ENCODE measurements at regions of chr15 and their contacts with region 1.

Region 1: DNA sequence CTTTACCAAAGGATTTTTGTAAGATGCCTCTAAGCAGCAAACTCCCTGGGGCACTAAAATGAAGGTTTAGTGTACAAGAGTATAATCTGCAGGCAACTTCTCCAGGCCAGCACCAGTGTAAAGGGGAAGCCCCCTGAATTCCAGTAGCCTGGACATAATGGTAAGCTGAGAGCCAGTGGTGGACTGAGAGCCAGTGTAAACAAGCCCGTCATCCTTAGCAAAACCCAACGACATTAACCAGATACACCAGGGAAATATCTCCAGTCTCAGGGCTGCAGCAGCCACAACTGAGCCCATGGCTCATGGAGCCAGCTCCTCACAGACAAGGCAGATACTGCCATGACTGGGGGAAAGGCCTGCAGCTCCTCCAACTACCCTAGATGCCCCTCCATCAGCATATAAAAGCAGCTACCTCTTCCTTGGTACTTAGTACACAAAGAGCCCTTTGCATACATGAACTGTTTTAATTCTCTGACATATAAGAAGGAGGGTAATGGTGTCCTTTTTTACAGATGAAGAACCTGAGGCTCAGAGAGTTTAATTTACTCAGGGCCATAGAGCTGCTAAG is 21.7 kb downstream of the PARP16 start:
- DNase-seq: peak in 1 of 2 donors; percentile 49
- H3K4me3 ChIP-seq: no peak overlapping the region
- H3K27ac ChIP-seq: peak overlapping the region in 3 of 5 donors; percentile 18 to 46 (median 32)
- H3K4me1 ChIP-seq: peaks cover 3 to 53% (median 11%) of the 10 kb centered on the region in 4 donors
- H3K27me3 ChIP-seq: no peaks in the 10 kb centered on the region
- CTCF ChIP-seq: no peak
- EP300 ChIP-seq: no peak
- POLR2A ChIP-seq: no peak

Region 2: DNA sequence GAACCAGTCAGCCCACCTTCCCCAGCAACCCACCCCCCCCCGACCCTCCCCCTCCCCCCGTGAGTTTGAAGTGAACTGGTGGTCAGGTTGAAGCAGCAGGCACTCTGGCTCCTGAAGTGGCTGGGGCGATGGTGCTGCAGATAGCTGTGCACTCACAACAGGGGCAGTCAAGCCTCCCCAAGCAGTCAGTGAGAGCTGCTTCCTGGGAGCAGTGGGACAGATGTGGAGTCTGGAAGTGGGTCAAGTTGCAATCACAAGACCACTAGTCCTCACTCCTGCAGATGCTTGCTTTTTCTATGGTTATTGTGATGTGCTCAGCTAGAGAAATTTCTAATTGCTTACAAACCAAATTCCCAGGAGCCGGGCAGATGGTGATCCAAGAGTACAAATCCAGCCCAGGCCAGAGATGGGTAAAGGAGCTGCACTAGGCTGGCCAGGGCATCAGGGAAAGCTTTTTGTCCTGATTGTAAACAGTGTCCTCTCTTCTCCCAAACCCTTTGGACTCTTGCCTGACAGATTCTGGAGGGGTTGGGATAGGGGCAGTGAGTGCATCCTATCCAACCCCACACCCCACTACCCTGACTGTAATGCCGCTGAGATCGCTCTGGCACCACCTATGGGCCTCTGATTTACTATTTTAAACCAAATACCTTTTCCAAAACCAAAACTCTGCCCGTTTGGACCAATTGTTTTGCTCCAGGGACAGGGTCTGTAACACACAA is 70.0 kb before region 1 on chr15:
- intact Hi-C with region 1: loop called (anchors 5 kb)
- DNase-seq: peak in 1 of 2 donors; percentile 69
- H3K4me3 ChIP-seq: no peak overlapping the region
- H3K27ac ChIP-seq: peak overlapping the region in 3 of 5 donors; percentile 19 to 64 (median 56)
- H3K4me1 ChIP-seq: peaks cover 0 to 11% (median 0%) of the 10 kb centered on the region in 4 donors
- H3K27me3 ChIP-seq: no peaks in the 10 kb centered on the region
- CTCF ChIP-seq: no peak
- EP300 ChIP-seq: no peak
- POLR2A ChIP-seq: no peak

Region 3: DNA sequence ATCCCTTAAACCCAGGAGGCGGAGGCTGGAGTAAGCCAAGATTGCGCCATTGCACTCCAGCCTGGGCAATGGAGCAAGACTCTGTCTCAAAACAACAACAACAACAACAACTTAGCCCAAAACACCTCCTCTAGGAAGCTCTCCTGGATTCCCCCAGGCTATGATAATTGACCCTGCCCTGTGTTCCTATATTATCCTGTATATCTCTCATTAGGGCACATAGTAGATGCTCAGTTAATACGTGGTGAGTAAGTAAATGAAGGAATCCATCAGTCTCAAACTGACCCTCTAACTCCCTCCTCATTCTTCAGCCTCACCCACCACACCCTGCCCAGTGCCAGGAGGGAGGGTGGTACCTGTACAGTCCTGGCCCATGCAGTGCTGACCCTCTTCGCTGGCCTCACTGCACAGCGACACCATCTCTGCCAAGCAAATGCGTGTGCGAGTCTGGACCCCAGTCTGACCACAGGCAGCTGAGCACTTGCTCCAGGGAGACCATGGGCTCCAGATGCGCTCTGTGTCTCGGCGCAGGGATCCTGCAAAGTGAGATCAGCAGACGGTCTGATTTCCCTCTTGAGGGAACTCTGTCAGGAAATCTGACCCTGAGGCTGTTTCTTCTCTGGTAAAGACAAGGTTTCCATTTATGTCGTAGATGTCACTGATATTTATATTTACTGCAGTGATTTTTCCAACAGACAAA is 59.9 kb before region 1 on chr15:
- intact Hi-C with region 1: no loop called
- DNase-seq: no peak
- H3K4me3 ChIP-seq: no peak overlapping the region
- H3K27ac ChIP-seq: no peak overlapping the region
- H3K4me1 ChIP-seq: no peaks in the 10 kb centered on the region
- H3K27me3 ChIP-seq: no peaks in the 10 kb centered on the region
- CTCF ChIP-seq: no peak
- EP300 ChIP-seq: no peak
- POLR2A ChIP-seq: no peak

Region 4: DNA sequence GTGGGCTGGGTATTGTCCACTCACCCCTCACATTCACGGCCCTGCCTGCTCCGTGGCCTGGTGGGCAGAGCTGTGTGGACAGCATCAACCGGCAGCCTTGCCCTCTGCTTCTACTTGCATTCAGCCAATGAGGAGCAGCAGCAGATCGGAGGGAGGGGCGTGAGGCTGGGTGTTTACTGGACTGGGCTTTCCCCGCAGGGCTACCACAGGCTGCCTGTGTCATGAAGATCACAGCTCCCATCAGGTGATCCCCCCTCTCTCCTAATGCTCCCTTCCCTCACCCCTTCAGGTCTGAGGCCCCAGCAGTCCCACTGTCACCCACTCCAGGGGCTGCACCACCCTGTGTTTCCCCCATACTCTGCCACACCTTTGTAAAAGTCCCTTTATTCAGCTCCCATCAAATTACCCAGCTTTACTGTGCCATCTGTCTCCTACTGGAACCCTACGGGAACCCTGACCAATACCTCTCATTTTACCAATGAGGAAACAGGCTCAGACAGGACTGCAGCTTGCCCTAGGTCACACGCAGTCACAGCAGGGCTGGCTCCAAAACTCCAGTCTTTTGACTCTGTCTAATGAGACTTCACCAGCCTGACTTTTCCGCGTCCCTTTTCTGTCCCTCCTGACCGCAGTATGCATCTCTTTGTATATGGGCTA is 907.5 kb after region 1 on chr15:
- intact Hi-C with region 1: no loop called
- DNase-seq: peak in 1 of 2 donors; percentile 32
- H3K4me3 ChIP-seq: no peak overlapping the region
- H3K27ac ChIP-seq: no peak overlapping the region
- H3K4me1 ChIP-seq: no peaks in the 10 kb centered on the region
- H3K27me3 ChIP-seq: peaks cover 0 to 38% (median 0%) of the 10 kb centered on the region in 3 donors
- CTCF ChIP-seq: no peak
- EP300 ChIP-seq: no peak
- POLR2A ChIP-seq: no peak

Measured in stomach (tissue), 19 donors.